SK-N-SH (cell line): ENCODE measurements at regions of chr7 and their contacts with region 1.

Region 1: GRCh38 chr7:31122649-31123058 is 70.5 kb downstream of the ADCYAP1R1 start:
- DNase-seq: peak; percentile 74
- H3K4me3 ChIP-seq: no peak overlapping the region; a peak in 1 of 4 replicates
- H3K27ac ChIP-seq: no peak overlapping the region
- H3K4me1 ChIP-seq: peaks cover 0 to 2% of the 10 kb centered on the region in 2 experiments; a peak in 2 of 4 replicates
- H3K27me3 ChIP-seq: no peaks in the 10 kb centered on the region; the same call in 1 of the 2 replicates
- CTCF ChIP-seq: peak; percentile 99
- EP300 ChIP-seq: no peak
- RAD21 ChIP-seq: peak; percentile 98

Region 2: DNA sequence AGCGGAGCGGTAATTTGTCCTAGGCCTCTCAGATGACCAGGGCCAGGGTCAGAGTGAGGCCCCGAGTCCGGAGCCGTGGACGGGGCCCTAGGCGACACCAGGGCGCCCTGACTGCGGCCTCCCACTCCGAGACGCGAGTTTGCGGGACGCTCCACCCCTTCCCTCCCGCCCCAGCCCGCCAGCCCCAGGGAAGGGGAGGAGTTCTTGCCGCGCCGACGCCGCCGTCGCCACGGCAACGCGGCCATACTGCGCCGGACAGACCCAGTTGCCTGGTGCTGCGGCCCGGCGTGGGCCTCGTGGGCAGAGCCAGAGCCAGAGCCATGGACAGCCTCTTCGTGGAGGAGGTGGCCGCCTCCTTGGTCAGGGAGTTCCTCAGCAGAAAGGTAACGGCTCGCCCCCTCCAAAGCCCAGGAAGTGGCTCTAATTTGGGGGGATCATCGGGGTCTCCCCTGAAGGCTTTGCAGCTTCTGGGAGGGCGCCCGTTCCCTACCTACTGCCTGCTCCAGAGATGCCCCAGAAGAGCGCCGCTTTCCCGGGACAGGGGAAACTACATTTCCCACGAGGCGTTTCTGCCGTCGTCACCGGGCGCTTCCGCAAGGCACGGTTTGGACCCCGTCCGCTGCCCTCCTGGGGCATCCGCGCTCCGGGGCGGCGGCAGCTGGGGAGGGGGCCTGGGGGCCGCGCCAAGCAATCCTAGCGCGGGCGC is 351.3 kb before region 1 on chr7 and contains the start of gene MINDY4:
- CTCF ChIA-PET with region 1: interaction called, 15 read pairs
- POLR2A ChIA-PET with region 1: no interaction called
- DNase-seq: peak; percentile 99
- H3K4me3 ChIP-seq: peak within 1 kb of the TSS; percentile 85 to 91
- H3K27ac ChIP-seq: peak within 1 kb of the TSS; percentile 56 to 86
- H3K4me1 ChIP-seq: peaks cover 0 to 16% of the 10 kb centered on the region in 2 experiments; a peak in 2 of 4 replicates
- H3K27me3 ChIP-seq: no peaks in the 10 kb centered on the region
- CTCF ChIP-seq: no peak
- EP300 ChIP-seq: no peak
- RAD21 ChIP-seq: no peak
- polyA plus RNA-seq, gene MINDY4: 1.8 TPM in 2 replicates

Region 3: DNA sequence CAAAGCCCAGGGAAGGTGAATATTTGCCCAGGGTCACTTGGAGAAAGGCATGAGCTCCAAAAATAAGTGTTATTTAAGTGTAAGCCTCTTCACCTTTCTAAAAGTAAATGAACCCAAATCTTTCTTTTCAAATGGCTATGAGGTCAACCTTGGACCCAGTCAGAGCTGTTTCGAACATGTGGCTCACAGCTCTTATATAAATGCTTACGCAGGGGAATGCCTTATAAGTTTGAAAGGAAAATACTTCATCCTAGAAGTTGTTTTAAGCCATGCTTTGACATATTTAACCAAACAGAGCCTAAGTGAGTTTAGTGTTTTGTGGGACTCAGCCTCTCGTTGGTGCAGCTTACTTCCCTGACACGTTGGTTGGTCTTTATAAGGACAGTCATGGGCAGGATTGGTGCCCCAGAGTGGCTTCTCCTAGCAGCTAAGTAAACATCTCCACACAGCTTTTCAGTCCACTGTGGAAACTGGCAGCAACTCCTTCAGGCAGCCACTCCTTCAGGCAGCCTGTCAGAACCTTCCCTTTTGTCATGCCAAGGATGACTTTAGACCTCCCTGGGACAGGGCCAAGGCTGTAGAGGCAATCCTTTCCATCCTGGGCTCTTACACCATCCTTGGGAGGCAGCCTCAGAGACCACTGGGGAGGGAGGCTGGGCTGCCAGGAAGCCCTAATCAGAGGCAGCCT is 307.8 kb before region 1 on chr7:
- CTCF ChIA-PET with region 1: interaction called, 13 read pairs
- POLR2A ChIA-PET with region 1: no interaction called
- DNase-seq: no peak
- H3K4me3 ChIP-seq: no peak overlapping the region
- H3K27ac ChIP-seq: no peak overlapping the region
- H3K4me1 ChIP-seq: no peaks in the 10 kb centered on the region; a peak in 1 of 4 replicates
- H3K27me3 ChIP-seq: no peaks in the 10 kb centered on the region
- CTCF ChIP-seq: no peak
- EP300 ChIP-seq: no peak
- RAD21 ChIP-seq: no peak

Region 4: DNA sequence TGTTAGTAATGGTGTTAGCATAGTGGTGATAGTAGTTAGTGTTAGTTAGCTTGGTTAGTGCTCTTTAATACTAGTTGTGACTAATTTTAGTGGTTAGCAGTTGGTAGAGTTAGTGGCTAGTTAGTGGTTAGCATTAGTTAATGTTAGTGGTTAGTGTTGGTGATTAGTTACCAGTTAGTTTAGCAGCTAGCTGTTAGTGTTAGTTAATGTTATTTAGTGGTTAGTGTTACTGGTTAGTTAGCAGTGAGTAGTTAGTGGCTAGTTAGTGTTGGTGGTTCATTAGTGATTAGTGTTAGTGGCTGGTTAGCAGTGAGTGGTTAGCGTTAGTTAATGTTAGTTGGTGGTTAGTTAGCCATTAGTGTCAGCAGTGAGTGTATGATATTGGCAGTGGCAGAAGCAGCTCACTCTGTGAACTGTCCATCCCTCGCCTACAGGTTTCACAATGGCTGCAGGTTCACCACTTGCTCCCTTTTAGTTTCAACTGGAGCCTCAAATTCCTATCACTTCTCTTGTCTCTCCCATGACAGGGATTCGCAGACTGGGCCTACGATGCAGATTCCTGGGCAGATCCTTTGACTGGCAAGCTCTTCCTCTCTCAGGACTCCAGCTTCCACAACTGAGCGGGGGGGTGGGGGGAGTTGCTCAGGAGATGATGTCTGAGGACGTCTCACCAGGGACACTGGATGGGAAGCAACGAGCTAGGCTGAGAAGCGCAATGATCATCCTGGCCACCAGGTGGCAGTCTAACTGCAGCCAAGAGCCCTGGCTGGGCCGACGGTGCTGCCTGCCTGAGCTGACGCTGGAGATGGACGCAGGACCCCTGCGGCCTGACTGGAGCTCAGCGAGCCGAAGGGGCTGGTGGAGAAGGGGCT is 139.4 kb before region 1 on chr7:
- CTCF ChIA-PET with region 1: interaction called, 1,191 read pairs
- POLR2A ChIA-PET with region 1: interaction called, 35 read pairs
- DNase-seq: peak; percentile 94
- H3K4me3 ChIP-seq: peak overlapping the region in 1 of 2 experiments; percentile 8; a peak in 1 of 4 replicates
- H3K27ac ChIP-seq: no peak overlapping the region
- H3K4me1 ChIP-seq: peaks cover 0 to 7% of the 10 kb centered on the region in 2 experiments; a peak in 1 of 4 replicates
- H3K27me3 ChIP-seq: peaks cover 20% of the 10 kb centered on the region; the same call in 1 of the 2 replicates
- CTCF ChIP-seq: peak; percentile 97
- EP300 ChIP-seq: no peak
- RAD21 ChIP-seq: peak; percentile 100

Region 5: GRCh38 chr7:31027161-31027965 is 95.3 kb before region 1 on chr7:
- CTCF ChIA-PET with region 1: interaction called, 337 read pairs
- POLR2A ChIA-PET with region 1: no interaction called
- DNase-seq: peak; percentile 79
- H3K4me3 ChIP-seq: no peak overlapping the region
- H3K27ac ChIP-seq: no peak overlapping the region
- H3K4me1 ChIP-seq: peaks cover 0 to 23% of the 10 kb centered on the region in 2 experiments; a peak in 2 of 4 replicates
- H3K27me3 ChIP-seq: peaks cover 17% of the 10 kb centered on the region
- CTCF ChIP-seq: no peak
- EP300 ChIP-seq: no peak
- RAD21 ChIP-seq: no peak

Region 6: GRCh38 chr7:31082447-31082846 is 40.2 kb before region 1 on chr7:
- CTCF ChIA-PET with region 1: interaction called, 38 read pairs
- POLR2A ChIA-PET with region 1: no interaction called
- DNase-seq: no peak
- H3K4me3 ChIP-seq: no peak overlapping the region
- H3K27ac ChIP-seq: no peak overlapping the region
- H3K4me1 ChIP-seq: no peaks in the 10 kb centered on the region; a peak in 1 of 4 replicates
- H3K27me3 ChIP-seq: peaks cover 33% of the 10 kb centered on the region; the same call in 1 of the 2 replicates
- CTCF ChIP-seq: no peak
- EP300 ChIP-seq: no peak
- RAD21 ChIP-seq: no peak